ENCODE measurements at regions of chr1 and their contacts with region 1.

Region 1: GRCh38 chr1:28518000-28518744 is 12.3 kb downstream of the RCC1 start:
- DNase-seq: peak; percentile 90
- ATAC-seq: peak; percentile 66
- H3K4me3 ChIP-seq: peak overlapping the region; percentile 81
- H3K27ac ChIP-seq: peak overlapping the region; percentile 80
- H3K4me1 ChIP-seq: peaks cover 30% of the 10 kb centered on the region
- H3K27me3 ChIP-seq: no peaks in the 10 kb centered on the region
- CTCF ChIP-seq: peak; percentile 91

Region 2: DNA sequence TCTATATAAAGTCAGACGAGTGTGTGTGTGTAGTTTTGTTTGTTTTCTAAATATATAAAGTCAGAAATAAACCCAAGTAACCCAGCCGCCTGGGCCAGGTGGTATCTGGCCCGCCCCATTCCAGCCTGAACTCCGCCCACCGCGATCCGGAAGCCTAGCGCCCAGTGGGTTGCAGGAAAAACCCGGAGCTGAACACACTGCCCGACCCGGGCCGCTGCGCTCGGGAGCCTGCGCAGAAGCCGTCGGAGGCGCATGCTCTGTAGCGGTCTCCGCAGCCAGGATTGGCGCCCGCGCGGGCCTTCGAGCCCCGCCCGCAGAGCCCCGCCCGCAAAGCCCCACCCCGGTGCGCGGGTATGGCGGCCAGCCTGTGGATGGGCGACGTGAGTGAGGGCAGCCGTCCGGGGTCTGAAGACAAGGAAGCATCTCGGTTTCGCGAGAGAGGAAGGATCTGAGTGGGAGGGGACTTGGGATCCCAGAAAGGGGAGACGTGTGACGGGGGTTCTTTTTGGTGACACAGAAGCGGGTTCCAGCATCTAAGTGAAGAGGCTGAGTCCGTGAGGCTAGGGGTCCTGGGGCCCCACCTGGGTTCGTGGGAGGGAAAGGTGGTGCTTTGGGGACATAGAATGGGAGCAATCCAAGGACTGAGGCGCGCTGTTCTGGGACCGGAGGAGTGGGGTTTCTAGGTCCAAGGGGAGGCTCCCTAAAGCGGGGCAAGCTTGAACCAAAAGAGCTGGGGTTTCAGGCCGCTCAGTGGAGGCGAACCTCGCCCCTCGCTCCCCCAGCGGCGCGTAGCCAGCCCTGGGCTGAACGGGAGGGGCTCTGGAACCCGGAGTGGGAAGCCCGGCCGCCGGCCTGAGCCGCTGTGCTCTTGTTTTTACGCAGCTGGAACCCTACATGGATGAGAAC is 34.8 kb after region 1 on chr1 and contains the start of gene TRNAU1AP:
- CTCF ChIA-PET with region 1: interaction called, 7 read pairs
- POLR2A ChIA-PET with region 1: no interaction called
- intact Hi-C with region 1: loop called (anchors 2 kb)
- DNase-seq: peak; percentile 98
- ATAC-seq: peak; percentile 92
- H3K4me3 ChIP-seq: peak within 1 kb of the TSS; percentile 95
- H3K27ac ChIP-seq: peak within 1 kb of the TSS; percentile 45
- H3K4me1 ChIP-seq: peaks cover 8% of the 10 kb centered on the region; the same call in 1 of the 2 replicates
- H3K27me3 ChIP-seq: no peaks in the 10 kb centered on the region
- CTCF ChIP-seq: no peak
- total RNA-seq, gene TRNAU1AP: 19.6 and 27.2 TPM in 2 replicates

Region 3: GRCh38 chr1:28581536-28582247 is 63.5 kb after region 1 on chr1:
- CTCF ChIA-PET with region 1: interaction called, 3 read pairs
- POLR2A ChIA-PET with region 1: interaction called, 9 read pairs
- intact Hi-C with region 1: loop called (anchors 5 kb)
- DNase-seq: peak; percentile 95
- ATAC-seq: peak; percentile 94
- H3K4me3 ChIP-seq: peak overlapping the region; percentile 99
- H3K27ac ChIP-seq: peak overlapping the region; percentile 66
- H3K4me1 ChIP-seq: peaks cover 15% of the 10 kb centered on the region
- H3K27me3 ChIP-seq: no peaks in the 10 kb centered on the region
- CTCF ChIP-seq: 0 out of 2 replicates have a peak, but pooled peaks have one; percentile 7

Region 4: GRCh38 chr1:28591708-28592320 is 73.6 kb after region 1 on chr1 and contains the start of gene RAB42:
- CTCF ChIA-PET with region 1: no interaction called
- POLR2A ChIA-PET with region 1: interaction called, 33 read pairs
- intact Hi-C with region 1: no loop called
- DNase-seq: no peak
- ATAC-seq: no peak
- H3K4me3 ChIP-seq: peak within 1 kb of the TSS; percentile 66
- H3K27ac ChIP-seq: no peak within 1 kb of the TSS
- H3K4me1 ChIP-seq: peaks cover 17% of the 10 kb centered on the region
- H3K27me3 ChIP-seq: no peaks in the 10 kb centered on the region
- CTCF ChIP-seq: no peak
- total RNA-seq, gene RAB42: 1.5 and 4.7 TPM in 2 replicates